ENCODE measurements at regions of chr19 and their contacts with region 1.

Region 1: GRCh38 chr19:21202865-21203494 is 61.1 kb downstream of the ZNF431 start:
- DNase-seq: peak; percentile 53 to 68 (median 59)
- ATAC-seq: peak; percentile 88
- H3K4me3 ChIP-seq: no peak overlapping the region
- H3K27ac ChIP-seq: no peak overlapping the region
- H3K4me1 ChIP-seq: peaks cover 0 to 8% of the 10 kb centered on the region in 2 experiments; a peak in 2 of 5 replicates
- H3K27me3 ChIP-seq: no peaks in the 10 kb centered on the region
- CTCF ChIP-seq: peak; percentile 78 to 88 (median 82)
- EP300 ChIP-seq: no peak
- POLR2A ChIP-seq: no peak
- RAD21 ChIP-seq: peak; percentile 38 to 87; a peak in 3 of 4 replicates

Region 2: DNA sequence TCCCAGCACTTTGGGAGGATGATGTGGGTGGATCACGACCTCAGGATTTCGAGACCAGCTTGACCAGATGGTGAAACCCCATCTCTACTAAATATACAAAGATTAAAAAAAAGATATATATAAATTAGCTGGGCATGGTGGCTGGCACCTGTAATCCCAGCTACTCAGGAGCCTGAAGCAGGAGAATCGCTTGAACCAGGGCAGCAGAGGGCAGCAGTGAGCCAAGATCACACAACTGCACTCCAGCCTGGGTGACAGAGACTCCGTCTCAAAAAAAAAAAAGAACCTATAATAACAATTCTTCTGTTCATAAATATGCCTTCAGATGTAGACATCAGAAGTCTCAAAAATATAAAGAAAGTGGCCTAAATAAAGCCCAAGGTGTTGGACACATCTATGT is 645.0 kb before region 1 on chr19:
- CTCF ChIA-PET with region 1: no interaction called
- POLR2A ChIA-PET with region 1: no interaction called
- in situ Hi-C with region 1: no loop called
- intact Hi-C with region 1: no loop called
- DNase-seq: peak in 1 of 4 experiments; percentile 26
- ATAC-seq: no peak
- H3K4me3 ChIP-seq: no peak overlapping the region
- H3K27ac ChIP-seq: no peak overlapping the region
- H3K4me1 ChIP-seq: no peaks in the 10 kb centered on the region
- H3K27me3 ChIP-seq: no peaks in the 10 kb centered on the region
- CTCF ChIP-seq: peak in 2 of 3 experiments; percentile 16 to 21; a peak in 1 of 6 replicates
- EP300 ChIP-seq: no peak
- POLR2A ChIP-seq: no peak
- RAD21 ChIP-seq: 0 out of 4 replicates have a peak, but pooled peaks of 1 of the 2 experiments have one; percentile 30

Region 3: DNA sequence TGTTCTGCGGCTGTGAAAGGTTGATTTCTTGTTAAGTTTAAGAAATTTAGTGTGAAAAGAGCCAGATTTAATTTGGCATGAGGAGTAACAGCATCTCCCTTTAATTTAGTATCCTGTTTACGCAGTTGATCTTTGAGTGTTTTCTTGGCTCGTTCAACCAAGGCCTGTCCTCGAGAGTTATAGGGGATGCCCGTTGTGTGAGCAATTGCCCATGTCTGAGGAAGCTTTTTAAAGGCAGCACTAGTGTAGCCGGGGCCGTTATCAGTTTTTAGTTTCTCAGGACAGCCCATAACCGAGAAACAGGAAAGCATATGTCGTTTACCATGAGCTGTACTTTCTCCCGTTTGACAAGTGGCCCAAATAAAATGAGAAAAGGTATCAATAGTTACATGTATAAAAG is 680.5 kb after region 1 on chr19:
- CTCF ChIA-PET with region 1: no interaction called
- POLR2A ChIA-PET with region 1: no interaction called
- in situ Hi-C with region 1: loop called (anchors 25 kb)
- intact Hi-C with region 1: no loop called
- DNase-seq: no peak
- ATAC-seq: no peak
- H3K4me3 ChIP-seq: no peak overlapping the region
- H3K27ac ChIP-seq: no peak overlapping the region
- H3K4me1 ChIP-seq: no peaks in the 10 kb centered on the region
- H3K27me3 ChIP-seq: no peaks in the 10 kb centered on the region
- CTCF ChIP-seq: no peak
- EP300 ChIP-seq: no peak
- POLR2A ChIP-seq: no peak
- RAD21 ChIP-seq: no peak

Region 4: DNA sequence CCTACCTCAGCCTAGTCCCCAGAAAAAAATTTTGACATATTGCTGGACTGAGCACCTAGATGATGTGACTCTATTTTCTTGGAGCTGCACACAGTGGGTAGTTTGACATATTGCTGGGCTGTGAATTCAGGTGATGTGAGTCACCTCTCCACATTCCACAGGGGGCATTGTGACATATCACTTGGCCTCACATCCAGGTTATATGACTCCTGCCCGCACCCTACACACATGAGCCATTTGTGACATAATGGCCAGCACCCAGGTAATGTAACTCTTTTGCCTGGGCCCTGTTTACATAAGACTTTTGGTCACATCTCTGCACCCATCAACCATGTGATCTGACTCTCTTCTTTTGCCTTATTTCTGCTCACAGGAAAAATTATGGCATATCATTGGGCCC is 688.1 kb after region 1 on chr19:
- CTCF ChIA-PET with region 1: no interaction called
- POLR2A ChIA-PET with region 1: no interaction called
- in situ Hi-C with region 1: loop called (anchors 25 kb)
- intact Hi-C with region 1: loop called (anchors 5 kb)
- DNase-seq: no peak
- ATAC-seq: no peak
- H3K4me3 ChIP-seq: no peak overlapping the region
- H3K27ac ChIP-seq: no peak overlapping the region
- H3K4me1 ChIP-seq: no peaks in the 10 kb centered on the region
- H3K27me3 ChIP-seq: no peaks in the 10 kb centered on the region
- CTCF ChIP-seq: no peak
- EP300 ChIP-seq: no peak
- POLR2A ChIP-seq: no peak
- RAD21 ChIP-seq: no peak

Measured in K562 (cell line).